ENCODE measurements at regions of chr6 and their contacts with region 1.

Region 1: DNA sequence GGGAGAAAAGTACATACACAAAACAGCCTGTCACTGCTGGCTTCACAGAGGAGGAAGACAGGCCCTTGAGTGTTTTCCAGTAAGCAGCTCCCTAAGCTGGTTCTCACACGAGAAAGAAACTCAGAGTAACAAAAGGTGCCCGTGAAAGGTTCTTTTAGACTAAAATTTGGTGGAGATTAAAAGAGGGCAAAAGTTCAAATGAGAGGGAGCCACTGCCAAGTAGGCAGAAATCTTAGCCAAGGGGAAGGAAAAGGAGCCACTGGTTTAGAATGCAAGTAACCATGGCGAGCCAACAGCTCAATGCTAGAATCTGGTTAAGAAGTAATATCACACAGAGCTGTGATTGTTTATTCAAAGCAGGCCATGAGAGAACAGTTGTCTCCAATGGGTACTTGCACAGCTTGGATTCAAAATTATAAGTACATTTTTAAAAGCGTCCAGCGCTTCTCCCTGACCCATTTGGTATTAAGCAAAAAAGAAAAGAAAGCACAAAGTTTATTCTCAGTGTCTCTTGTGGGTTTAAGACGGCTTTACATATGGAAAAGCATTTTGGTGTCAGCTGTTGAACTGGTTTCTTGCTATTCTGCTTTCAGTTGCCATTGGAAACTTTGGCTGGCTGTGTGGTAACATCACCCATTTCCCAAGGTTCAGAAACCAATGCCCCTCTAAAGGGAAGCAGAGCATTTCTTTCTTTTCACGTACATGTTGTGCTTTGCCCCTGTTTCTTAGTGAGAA is 648.5 kb downstream of the RNF144B start:
- DNase-seq: no peak

Region 2: GRCh38 chr6:19100755-19101154 is 65.1 kb after region 1 on chr6:
- intact Hi-C with region 1: no loop called
- DNase-seq: no peak

Region 3: GRCh38 chr6:19333936-19334335 is 298.3 kb after region 1 on chr6:
- intact Hi-C with region 1: loop called in 1 of 2 experiments (anchors 10 kb)
- DNase-seq: no peak

Measured in posterior vena cava (tissue), 2 donors.